ENCODE measurements at regions of chr6 and their contacts with region 1.

Region 1: GRCh38 chr6:131787766-131788712 is 19.8 kb upstream of the ENPP1 start:
- DNase-seq: no peak
- H3K4me3 Mint-ChIP-seq: no peak overlapping the region
- H3K27ac Mint-ChIP-seq: no peak overlapping the region
- H3K4me1 Mint-ChIP-seq: peaks cover 37% of the 10 kb centered on the region
- H3K27me3 Mint-ChIP-seq: no peaks in the 10 kb centered on the region

Region 2: GRCh38 chr6:131281471-131282270 is 506.4 kb before region 1 on chr6:
- intact Hi-C with region 1: loop called (anchors 5 kb)
- DNase-seq: peak; percentile 58
- H3K4me3 Mint-ChIP-seq: peak overlapping the region; percentile 37
- H3K27ac Mint-ChIP-seq: peak overlapping the region; percentile 73
- H3K4me1 Mint-ChIP-seq: peaks cover 16% of the 10 kb centered on the region
- H3K27me3 Mint-ChIP-seq: no peaks in the 10 kb centered on the region

Region 3: DNA sequence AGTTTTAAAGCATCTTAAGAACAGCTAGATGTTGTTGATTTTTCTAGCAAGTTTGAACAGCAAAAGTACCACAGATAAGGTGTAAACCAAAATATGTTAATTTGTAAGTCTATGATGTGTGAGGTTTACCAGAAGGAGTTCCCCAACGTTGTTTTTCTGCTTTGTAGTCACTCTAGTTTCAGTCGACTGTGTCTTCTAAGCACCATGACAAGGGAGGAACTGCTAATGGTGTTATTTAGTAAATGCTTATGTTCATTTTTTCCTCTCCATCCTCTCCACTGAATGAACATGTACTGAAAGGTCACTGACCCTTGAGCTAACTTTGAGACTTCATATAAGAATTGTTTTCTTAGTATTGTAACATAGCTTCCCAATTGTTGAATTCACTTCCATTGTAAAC is 147.9 kb before region 1 on chr6:
- intact Hi-C with region 1: loop called (anchors 2 kb)
- DNase-seq: no peak
- H3K4me3 Mint-ChIP-seq: peak overlapping the region; percentile 53
- H3K27ac Mint-ChIP-seq: peak overlapping the region; percentile 86
- H3K4me1 Mint-ChIP-seq: peaks cover 26% of the 10 kb centered on the region
- H3K27me3 Mint-ChIP-seq: no peaks in the 10 kb centered on the region

Region 4: GRCh38 chr6:131802347-131802746 is 14.3 kb after region 1 on chr6:
- intact Hi-C with region 1: loop called (anchors 1 kb)
- DNase-seq: no peak
- H3K4me3 Mint-ChIP-seq: no peak overlapping the region
- H3K27ac Mint-ChIP-seq: no peak overlapping the region
- H3K4me1 Mint-ChIP-seq: peaks cover 41% of the 10 kb centered on the region
- H3K27me3 Mint-ChIP-seq: peaks cover 18% of the 10 kb centered on the region

Region 5: GRCh38 chr6:131807644-131808459 is 19.8 kb after region 1 on chr6 and contains the start of gene ENPP1:
- intact Hi-C with region 1: loop called (anchors 2 kb)
- DNase-seq: peak; percentile 52
- H3K4me3 Mint-ChIP-seq: peak within 1 kb of the TSS; percentile 90
- H3K27ac Mint-ChIP-seq: peak within 1 kb of the TSS; percentile 85
- H3K4me1 Mint-ChIP-seq: peaks cover 37% of the 10 kb centered on the region
- H3K27me3 Mint-ChIP-seq: peaks cover 40% of the 10 kb centered on the region
- total RNA-seq, gene ENPP1: 34.8 TPM in 2 replicates

Region 6: GRCh38 chr6:131851049-131851769 is 63.2 kb after region 1 on chr6:
- intact Hi-C with region 1: no loop called
- DNase-seq: no peak
- H3K4me3 Mint-ChIP-seq: no peak overlapping the region
- H3K27ac Mint-ChIP-seq: no peak overlapping the region
- H3K4me1 Mint-ChIP-seq: no peaks in the 10 kb centered on the region
- H3K27me3 Mint-ChIP-seq: peaks cover 5% of the 10 kb centered on the region

Region 7: DNA sequence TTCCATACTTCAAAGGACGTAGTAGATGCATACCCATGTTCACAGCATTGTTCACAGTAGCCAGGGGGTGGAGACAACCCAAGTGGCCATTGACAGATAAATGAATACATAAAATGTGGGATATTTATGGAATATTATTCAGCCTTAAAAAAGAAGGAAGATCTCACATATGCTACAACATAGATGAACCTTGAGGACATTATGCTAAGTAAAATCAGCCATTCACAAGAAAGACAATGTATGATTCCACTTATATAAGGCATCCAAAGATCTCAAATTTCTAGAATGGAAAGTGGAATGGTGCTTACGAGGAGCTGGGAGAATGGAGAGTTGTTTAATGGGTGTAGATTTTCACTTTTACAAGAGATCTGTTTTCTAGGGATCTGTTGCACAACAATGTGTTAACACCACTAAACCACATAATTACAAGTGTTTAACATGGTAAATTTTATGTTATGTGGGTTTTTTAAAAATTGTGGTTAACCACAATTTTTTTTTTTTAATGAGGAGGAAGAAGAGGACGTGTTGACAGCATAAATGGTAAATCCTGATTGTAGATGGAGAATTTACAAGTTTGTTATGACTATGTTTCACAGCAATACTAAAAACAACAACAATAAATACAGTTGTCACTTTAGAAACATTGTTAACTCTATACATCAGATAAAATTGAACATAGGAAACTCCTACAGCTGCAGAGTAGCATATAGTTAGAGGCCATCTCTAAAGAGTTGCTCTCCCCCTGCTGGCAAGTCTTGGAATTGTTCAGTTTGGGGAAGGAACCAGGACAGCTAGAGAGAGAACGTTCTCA is 121.6 kb after region 1 on chr6:
- intact Hi-C with region 1: loop called (anchors 2 kb)
- DNase-seq: peak; percentile 66
- H3K4me3 Mint-ChIP-seq: no peak overlapping the region
- H3K27ac Mint-ChIP-seq: peak overlapping the region; percentile 67
- H3K4me1 Mint-ChIP-seq: peaks cover 30% of the 10 kb centered on the region
- H3K27me3 Mint-ChIP-seq: peaks cover 29% of the 10 kb centered on the region

Region 8: GRCh38 chr6:132365281-132365907 is 577.4 kb after region 1 on chr6:
- intact Hi-C with region 1: loop called (anchors 5 kb)
- DNase-seq: no peak
- H3K4me3 Mint-ChIP-seq: no peak overlapping the region
- H3K27ac Mint-ChIP-seq: peak overlapping the region; percentile 38
- H3K4me1 Mint-ChIP-seq: peaks cover 17% of the 10 kb centered on the region
- H3K27me3 Mint-ChIP-seq: peaks cover 42% of the 10 kb centered on the region

Region 9: GRCh38 chr6:132798869-132799538 is 1011.0 kb after region 1 on chr6:
- intact Hi-C with region 1: no loop called
- DNase-seq: peak; percentile 53
- H3K4me3 Mint-ChIP-seq: peak overlapping the region; percentile 90
- H3K27ac Mint-ChIP-seq: no peak overlapping the region
- H3K4me1 Mint-ChIP-seq: peaks cover 6% of the 10 kb centered on the region
- H3K27me3 Mint-ChIP-seq: peaks cover 8% of the 10 kb centered on the region

Measured in activated T-helper 2 cell treated with anti-CD3 and anti-CD28 coated beads, Interferon-gamma antibody, Interleukin-2, Interleukin-4, amounts not matched to agents 10 μg/mL and 5 μg/mL and 100 μg/mL, durations not matched to agents 14 hours and 24 hours and 36 hours (primary cell).